Prostate gland (tissue), 2 donors: ENCODE measurements at regions of chr9 and their contacts with region 1.

Region 1: GRCh38 chr9:4375424-4376200 is 75.7 kb upstream of the GLIS3 start:
- DNase-seq: peak; percentile 7
- H3K4me3 ChIP-seq: no peak overlapping the region
- H3K27ac ChIP-seq: peak overlapping the region in 1 of 2 donors; percentile 7
- H3K4me1 ChIP-seq: no peaks in the 10 kb centered on the region
- H3K27me3 ChIP-seq: no peaks in the 10 kb centered on the region
- CTCF ChIP-seq: peak in 3 of 4 experiments; percentile 54 to 71 (median 61)
- POLR2A ChIP-seq: no peak

Region 2: GRCh38 chr9:4315582-4316215 is 59.9 kb before region 1 on chr9:
- intact Hi-C with region 1: loop called (anchors 10 kb)
- DNase-seq: peak; percentile 72
- H3K4me3 ChIP-seq: no peak overlapping the region
- H3K27ac ChIP-seq: no peak overlapping the region
- H3K4me1 ChIP-seq: no peaks in the 10 kb centered on the region
- H3K27me3 ChIP-seq: no peaks in the 10 kb centered on the region
- CTCF ChIP-seq: peak; percentile 49 to 76 (median 75)
- POLR2A ChIP-seq: no peak